ENCODE measurements at regions of chr3 and their contacts with region 1.

Region 1: GRCh38 chr3:11204697-11205348 is 50.5 kb downstream of the HRH1 start:
- DNase-seq: no peak
- ATAC-seq: no peak
- H3K4me3 ChIP-seq: no peak overlapping the region
- H3K27ac ChIP-seq: no peak overlapping the region
- H3K4me1 ChIP-seq: no peaks in the 10 kb centered on the region
- H3K27me3 ChIP-seq: peaks cover 28 to 67% of the 10 kb centered on the region in 2 experiments
- CTCF ChIP-seq: no peak
- EP300 ChIP-seq: no peak
- POLR2A ChIP-seq: no peak
- RAD21 ChIP-seq: no peak

Region 2: DNA sequence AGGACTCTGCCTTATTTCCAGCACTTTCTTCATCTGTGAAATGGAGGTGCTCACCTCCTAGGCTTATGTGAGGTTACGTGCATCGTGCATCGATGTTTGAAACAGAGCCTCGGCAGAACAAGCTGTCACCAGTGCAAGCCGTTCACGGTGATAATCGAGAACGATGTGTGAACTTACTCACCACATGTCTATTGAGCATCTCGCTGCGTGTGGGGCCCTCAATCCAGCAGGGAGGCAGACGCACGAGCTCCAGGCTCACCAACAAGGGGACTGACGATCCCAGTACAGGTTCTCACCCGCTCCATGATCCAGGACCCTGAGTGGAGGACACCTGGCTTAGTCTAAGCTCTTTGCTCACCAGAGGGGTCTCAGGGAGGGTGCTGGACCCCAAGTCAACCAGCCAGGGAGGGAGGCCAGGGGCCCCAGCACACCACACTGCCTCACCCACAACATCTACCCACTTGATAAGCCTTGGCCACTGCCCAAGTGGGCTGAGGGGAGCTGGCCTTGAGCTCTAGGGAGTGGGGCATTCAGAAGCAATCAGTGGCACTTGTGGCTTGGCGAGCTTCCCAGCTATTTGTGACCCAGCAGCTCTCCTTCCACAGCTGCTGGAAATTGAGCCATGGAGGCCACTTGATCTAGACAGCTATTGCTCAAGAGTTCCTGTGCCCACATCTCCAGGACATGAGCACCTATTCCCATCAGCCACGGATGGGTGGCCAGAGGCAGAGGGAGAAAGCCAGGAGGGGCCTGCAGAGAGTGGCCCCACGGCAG is 246.7 kb before region 1 on chr3:
- CTCF ChIA-PET with region 1: no interaction called
- POLR2A ChIA-PET with region 1: no interaction called
- in situ Hi-C with region 1: no loop called
- intact Hi-C with region 1: no loop called
- DNase-seq: no peak
- ATAC-seq: no peak
- H3K4me3 ChIP-seq: no peak overlapping the region
- H3K27ac ChIP-seq: no peak overlapping the region
- H3K4me1 ChIP-seq: no peaks in the 10 kb centered on the region
- H3K27me3 ChIP-seq: peaks cover 2 to 45% of the 10 kb centered on the region in 2 experiments; a peak in 2 of 5 replicates
- CTCF ChIP-seq: no peak
- EP300 ChIP-seq: no peak
- POLR2A ChIP-seq: no peak
- RAD21 ChIP-seq: no peak

Region 3: GRCh38 chr3:11060500-11061251 is 144.1 kb before region 1 on chr3:
- CTCF ChIA-PET with region 1: no interaction called
- POLR2A ChIA-PET with region 1: no interaction called
- in situ Hi-C with region 1: no loop called
- intact Hi-C with region 1: loop called (anchors 5 kb)
- DNase-seq: peak; percentile 53 to 77 (median 70)
- ATAC-seq: peak; percentile 92
- H3K4me3 ChIP-seq: no peak overlapping the region
- H3K27ac ChIP-seq: no peak overlapping the region
- H3K4me1 ChIP-seq: peaks cover 0 to 10% of the 10 kb centered on the region in 2 experiments; a peak in 2 of 5 replicates
- H3K27me3 ChIP-seq: peaks cover 0 to 19% of the 10 kb centered on the region in 2 experiments; a peak in 2 of 5 replicates
- CTCF ChIP-seq: peak; percentile 71 to 87 (median 82)
- EP300 ChIP-seq: no peak
- POLR2A ChIP-seq: no peak
- RAD21 ChIP-seq: peak; percentile 66 to 79

Region 4: GRCh38 chr3:11155341-11156025 is 49.3 kb before region 1 on chr3:
- CTCF ChIA-PET with region 1: no interaction called
- POLR2A ChIA-PET with region 1: no interaction called
- in situ Hi-C with region 1: no loop called
- intact Hi-C with region 1: loop called (anchors 5 kb)
- DNase-seq: peak; percentile 31 to 52 (median 46)
- ATAC-seq: peak; percentile 96
- H3K4me3 ChIP-seq: no peak overlapping the region
- H3K27ac ChIP-seq: no peak overlapping the region
- H3K4me1 ChIP-seq: peaks cover 0 to 8% of the 10 kb centered on the region in 2 experiments; a peak in 1 of 5 replicates
- H3K27me3 ChIP-seq: peaks cover 19 to 44% of the 10 kb centered on the region in 2 experiments; a peak in 4 of 5 replicates
- CTCF ChIP-seq: peak; percentile 64 to 70 (median 68)
- EP300 ChIP-seq: no peak
- POLR2A ChIP-seq: no peak
- RAD21 ChIP-seq: peak; percentile 55 to 74

Region 5: GRCh38 chr3:11168881-11169805 is 35.7 kb before region 1 on chr3:
- CTCF ChIA-PET with region 1: no interaction called
- POLR2A ChIA-PET with region 1: no interaction called
- in situ Hi-C with region 1: no loop called
- intact Hi-C with region 1: no loop called
- DNase-seq: no peak
- ATAC-seq: no peak
- H3K4me3 ChIP-seq: no peak overlapping the region
- H3K27ac ChIP-seq: no peak overlapping the region
- H3K4me1 ChIP-seq: no peaks in the 10 kb centered on the region
- H3K27me3 ChIP-seq: peaks cover 30 to 59% of the 10 kb centered on the region in 2 experiments
- CTCF ChIP-seq: no peak
- EP300 ChIP-seq: no peak
- POLR2A ChIP-seq: no peak
- RAD21 ChIP-seq: no peak

Measured in K562 (cell line).